ENCODE measurements at regions of chr19 and their contacts with region 1.

Region 1: GRCh38 chr19:1863726-1864480 is 524 bp upstream of the KLF16 start:
- DNase-seq: peak; percentile 96
- ATAC-seq: peak; percentile 86

Region 2: DNA sequence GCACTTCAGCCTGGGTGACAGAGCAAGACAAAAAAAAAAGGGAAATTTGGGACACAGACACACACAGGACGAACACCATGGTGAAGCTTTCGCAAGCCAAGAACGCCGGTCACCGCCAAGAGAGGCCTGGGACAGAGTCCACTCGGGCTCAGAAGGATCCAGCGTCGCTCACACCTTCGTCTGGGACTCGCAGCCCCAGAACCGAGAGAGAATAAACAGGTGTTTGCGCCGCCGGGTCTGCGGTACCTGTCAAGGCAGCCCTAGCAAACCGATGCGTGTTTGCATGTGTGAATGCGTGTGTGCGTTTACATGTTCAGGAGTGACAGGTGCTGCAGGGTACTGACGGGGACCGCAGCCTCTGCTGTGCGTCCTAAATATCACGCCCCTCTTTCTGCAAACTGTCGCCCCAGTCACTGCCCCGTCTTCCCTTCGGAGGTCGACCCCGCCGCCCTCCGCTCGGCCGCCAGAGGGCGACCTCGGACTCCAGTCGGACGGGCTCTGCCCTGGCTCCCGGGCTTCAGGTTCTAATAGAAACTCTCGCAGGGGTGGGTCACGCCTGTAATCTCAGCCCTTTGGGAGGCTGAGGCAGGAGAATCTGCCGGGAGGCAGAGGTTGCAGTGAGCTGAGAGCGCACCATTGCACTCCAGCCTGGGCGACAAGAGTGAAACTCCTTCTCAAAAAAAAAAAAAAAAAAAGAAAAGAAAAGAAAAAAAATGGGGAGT is 65.3 kb after region 1 on chr19:
- intact Hi-C with region 1: loop called (anchors 2 kb)
- DNase-seq: peak; percentile 93
- ATAC-seq: peak; percentile 91

Measured in Right ventricle myocardium inferior (tissue), 1 donor.